Naive thymus-derived CD4-positive, alpha-beta T cell (primary cell): ENCODE measurements at regions of chr14 and their contacts with region 1.

Region 1: GRCh38 chr14:52351233-52352060 is 37.3 kb downstream of the PTGER2 start:
- DNase-seq: peak in 2 of 9 donors; percentile 2 to 10
- ATAC-seq: peak; percentile 54
- H3K4me3 ChIP-seq: peak overlapping the region; percentile 18
- H3K4me3 Mint-ChIP-seq: peak overlapping the region; percentile 48 to 94 (median 76)
- H3K27ac ChIP-seq: peak overlapping the region; percentile 59
- H3K27ac Mint-ChIP-seq: peak overlapping the region; percentile 81 to 100 (median 88)
- H3K4me1 ChIP-seq: peaks cover 46 to 53% of the 10 kb centered on the region in 2 donors
- H3K4me1 Mint-ChIP-seq: peaks cover 36 to 76% (median 62%) of the 10 kb centered on the region in 7 donors
- H3K27me3 ChIP-seq: no peaks in the 10 kb centered on the region
- H3K27me3 Mint-ChIP-seq: peaks cover 0 to 4% (median 0%) of the 10 kb centered on the region in 5 donors

Region 2: GRCh38 chr14:52286661-52287649 is 64.5 kb before region 1 on chr14:
- CTCF ChIA-PET with region 1: no interaction called
- POLR2A ChIA-PET with region 1: no interaction called
- intact Hi-C with region 1: loop called in 1 of 2 experiments (anchors 1 kb)
- DNase-seq: peak in 5 of 9 donors; percentile 9 to 37 (median 24)
- ATAC-seq: peak; percentile 44
- H3K4me3 ChIP-seq: peak overlapping the region; percentile 4
- H3K4me3 Mint-ChIP-seq: peak overlapping the region; percentile 4 to 73 (median 60)
- H3K27ac ChIP-seq: no peak overlapping the region
- H3K27ac Mint-ChIP-seq: peak overlapping the region in 7 of 9 donors; percentile 3 to 91 (median 16)
- H3K4me1 ChIP-seq: peaks cover 21 to 22% of the 10 kb centered on the region in 2 donors
- H3K4me1 Mint-ChIP-seq: peaks cover 19 to 52% (median 27%) of the 10 kb centered on the region in 7 donors
- H3K27me3 ChIP-seq: no peaks in the 10 kb centered on the region
- H3K27me3 Mint-ChIP-seq: peaks cover 0 to 15% (median 0%) of the 10 kb centered on the region in 5 donors

Region 3: DNA sequence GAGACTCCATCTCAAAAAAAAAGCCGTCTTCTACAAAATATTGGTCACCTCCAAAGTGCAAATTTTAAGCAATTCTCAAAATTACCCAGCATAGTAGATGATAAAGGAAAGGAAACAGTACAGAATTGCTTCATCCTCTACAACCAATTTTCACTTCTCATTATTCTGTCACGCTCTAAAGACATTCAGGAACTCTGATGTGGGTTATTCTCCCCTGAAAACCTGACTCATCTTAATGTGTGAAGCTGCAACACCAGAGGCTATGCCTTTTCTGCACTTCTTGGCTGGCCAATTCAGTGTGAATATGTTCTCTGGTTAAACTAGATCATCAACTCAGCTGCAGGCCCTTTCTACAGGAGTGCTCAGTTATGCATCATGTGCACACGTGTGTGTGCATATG is 26.3 kb before region 1 on chr14:
- CTCF ChIA-PET with region 1: no interaction called
- POLR2A ChIA-PET with region 1: no interaction called
- intact Hi-C with region 1: loop called in 1 of 2 experiments (anchors 1 kb)
- DNase-seq: no peak
- ATAC-seq: peak; percentile 84
- H3K4me3 ChIP-seq: no peak overlapping the region
- H3K4me3 Mint-ChIP-seq: peak overlapping the region in 2 of 10 donors; percentile 37 to 86
- H3K27ac ChIP-seq: no peak overlapping the region
- H3K27ac Mint-ChIP-seq: peak overlapping the region in 5 of 9 donors; percentile 16 to 86 (median 31)
- H3K4me1 ChIP-seq: peaks cover 0 to 63% of the 10 kb centered on the region in 2 donors
- H3K4me1 Mint-ChIP-seq: peaks cover 9 to 88% (median 20%) of the 10 kb centered on the region in 7 donors
- H3K27me3 ChIP-seq: no peaks in the 10 kb centered on the region
- H3K27me3 Mint-ChIP-seq: peaks cover 0 to 2% (median 0%) of the 10 kb centered on the region in 5 donors

Region 4: DNA sequence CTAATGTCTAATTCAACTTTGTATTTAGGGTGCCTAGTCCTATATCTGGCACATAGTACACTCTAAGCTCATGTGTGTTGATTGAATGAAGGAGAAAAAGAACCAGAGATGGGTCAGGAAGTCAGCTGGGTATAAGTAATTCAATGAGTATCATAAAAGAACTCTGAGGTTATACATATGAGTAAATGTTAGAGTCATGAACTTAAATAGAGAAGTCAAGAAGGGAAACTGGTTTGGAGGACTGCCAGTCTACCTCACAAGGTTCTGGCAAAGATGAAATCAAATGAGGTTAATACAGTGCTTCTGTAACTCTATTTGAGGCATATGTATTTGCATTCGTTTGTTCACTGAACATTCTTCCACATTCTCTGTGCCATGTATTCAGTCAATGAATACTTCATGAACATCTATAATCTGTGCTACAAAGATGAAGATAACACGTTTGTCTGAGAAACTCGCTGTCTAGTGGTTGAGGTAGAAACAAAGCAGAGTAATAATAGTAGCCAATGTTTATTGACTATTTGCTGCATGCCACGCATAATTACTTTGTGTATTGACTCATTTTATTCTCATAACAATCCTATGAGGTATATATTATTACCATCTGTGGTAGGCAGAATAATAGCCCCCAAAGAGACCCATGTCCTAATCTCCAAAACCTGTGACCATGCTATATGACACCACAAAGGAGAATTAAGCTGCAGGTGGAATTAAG is 51.5 kb after region 1 on chr14:
- CTCF ChIA-PET with region 1: no interaction called
- POLR2A ChIA-PET with region 1: no interaction called
- intact Hi-C with region 1: loop called (anchors 1 to 5 kb)
- DNase-seq: peak in 6 of 9 donors; percentile 16 to 56 (median 36)
- ATAC-seq: peak; percentile 75
- H3K4me3 ChIP-seq: no peak overlapping the region
- H3K4me3 Mint-ChIP-seq: peak overlapping the region in 5 of 10 donors; percentile 1 to 25 (median 9)
- H3K27ac ChIP-seq: no peak overlapping the region
- H3K27ac Mint-ChIP-seq: peak overlapping the region in 5 of 9 donors; percentile 3 to 85 (median 15)
- H3K4me1 ChIP-seq: peaks cover 45 to 48% of the 10 kb centered on the region in 2 donors
- H3K4me1 Mint-ChIP-seq: peaks cover 31 to 72% (median 61%) of the 10 kb centered on the region in 7 donors
- H3K27me3 ChIP-seq: no peaks in the 10 kb centered on the region
- H3K27me3 Mint-ChIP-seq: peaks cover 0 to 6% (median 0%) of the 10 kb centered on the region in 5 donors

Region 5: GRCh38 chr14:52473557-52473956 is 122.1 kb after region 1 on chr14:
- CTCF ChIA-PET with region 1: no interaction called
- POLR2A ChIA-PET with region 1: no interaction called
- intact Hi-C with region 1: loop called in 1 of 2 experiments (anchors 2 kb)
- DNase-seq: peak in 7 of 9 donors; percentile 16 to 60 (median 42)
- ATAC-seq: peak; percentile 42
- H3K4me3 ChIP-seq: no peak overlapping the region
- H3K4me3 Mint-ChIP-seq: no peak overlapping the region
- H3K27ac ChIP-seq: no peak overlapping the region
- H3K27ac Mint-ChIP-seq: no peak overlapping the region
- H3K4me1 ChIP-seq: no peaks in the 10 kb centered on the region
- H3K4me1 Mint-ChIP-seq: peaks cover 4 to 40% (median 24%) of the 10 kb centered on the region in 7 donors
- H3K27me3 ChIP-seq: no peaks in the 10 kb centered on the region
- H3K27me3 Mint-ChIP-seq: no peaks in the 10 kb centered on the region